CD4-positive, alpha-beta T cell (primary cell): ENCODE measurements at regions of chr3 and their contacts with region 1.

Region 1: GRCh38 chr3:125150525-125151441 is 61.8 kb downstream of the SLC12A8 start:
- DNase-seq: peak in 12 of 14 experiments; percentile 20 to 73 (median 38)
- ATAC-seq: peak; percentile 81
- H3K4me3 ChIP-seq: no peak overlapping the region
- H3K4me3 Mint-ChIP-seq: no peak overlapping the region
- H3K27ac ChIP-seq: no peak overlapping the region
- H3K27ac Mint-ChIP-seq: no peak overlapping the region
- H3K4me1 ChIP-seq: peaks cover 27% of the 10 kb centered on the region
- H3K4me1 Mint-ChIP-seq: peaks cover 8% of the 10 kb centered on the region
- H3K27me3 ChIP-seq: no peaks in the 10 kb centered on the region
- H3K27me3 Mint-ChIP-seq: no peaks in the 10 kb centered on the region
- CTCF ChIP-seq: peak; percentile 47

Region 2: GRCh38 chr3:124230998-124231397 is 919.8 kb before region 1 on chr3:
- CTCF ChIA-PET with region 1: no interaction called
- POLR2A ChIA-PET with region 1: no interaction called
- intact Hi-C with region 1: no loop called
- DNase-seq: no peak
- ATAC-seq: no peak
- H3K4me3 ChIP-seq: no peak overlapping the region
- H3K4me3 Mint-ChIP-seq: no peak overlapping the region
- H3K27ac ChIP-seq: no peak overlapping the region
- H3K27ac Mint-ChIP-seq: no peak overlapping the region
- H3K4me1 ChIP-seq: no peaks in the 10 kb centered on the region
- H3K4me1 Mint-ChIP-seq: no peaks in the 10 kb centered on the region
- H3K27me3 ChIP-seq: no peaks in the 10 kb centered on the region
- H3K27me3 Mint-ChIP-seq: peaks cover 40% of the 10 kb centered on the region
- CTCF ChIP-seq: no peak

Region 3: GRCh38 chr3:125129512-125129962 is 21.2 kb before region 1 on chr3:
- CTCF ChIA-PET with region 1: no interaction called
- POLR2A ChIA-PET with region 1: no interaction called
- intact Hi-C with region 1: no loop called
- DNase-seq: no peak
- ATAC-seq: no peak
- H3K4me3 ChIP-seq: no peak overlapping the region
- H3K4me3 Mint-ChIP-seq: no peak overlapping the region
- H3K27ac ChIP-seq: no peak overlapping the region
- H3K27ac Mint-ChIP-seq: no peak overlapping the region
- H3K4me1 ChIP-seq: peaks cover 7% of the 10 kb centered on the region
- H3K4me1 Mint-ChIP-seq: peaks cover 13% of the 10 kb centered on the region
- H3K27me3 ChIP-seq: no peaks in the 10 kb centered on the region
- H3K27me3 Mint-ChIP-seq: no peaks in the 10 kb centered on the region
- CTCF ChIP-seq: no peak

Region 4: GRCh38 chr3:125437631-125438435 is 287.1 kb after region 1 on chr3:
- CTCF ChIA-PET with region 1: no interaction called
- POLR2A ChIA-PET with region 1: no interaction called
- intact Hi-C with region 1: loop called (anchors 1 to 5 kb)
- DNase-seq: peak; percentile 45 to 78 (median 58)
- ATAC-seq: peak; percentile 59
- H3K4me3 ChIP-seq: no peak overlapping the region
- H3K4me3 Mint-ChIP-seq: no peak overlapping the region
- H3K27ac ChIP-seq: no peak overlapping the region
- H3K27ac Mint-ChIP-seq: no peak overlapping the region
- H3K4me1 ChIP-seq: peaks cover 2% of the 10 kb centered on the region
- H3K4me1 Mint-ChIP-seq: no peaks in the 10 kb centered on the region
- H3K27me3 ChIP-seq: no peaks in the 10 kb centered on the region
- H3K27me3 Mint-ChIP-seq: no peaks in the 10 kb centered on the region
- CTCF ChIP-seq: peak; percentile 95